ENCODE measurements at regions of chr5 and their contacts with region 1.

Region 1: GRCh38 chr5:55072666-55073065 is 29.8 kb upstream of the GZMA start:
- DNase-seq: peak in 4 of 5 donors; percentile 38 to 59 (median 44)
- H3K4me3 ChIP-seq: no peak overlapping the region
- H3K4me3 Mint-ChIP-seq: peak overlapping the region; percentile 8 to 84 (median 56)
- H3K27ac ChIP-seq: peak overlapping the region; percentile 17
- H3K27ac Mint-ChIP-seq: peak overlapping the region; percentile 20 to 88 (median 78)
- H3K4me1 ChIP-seq: peaks cover 39% of the 10 kb centered on the region
- H3K4me1 Mint-ChIP-seq: peaks cover 25 to 48% (median 30%) of the 10 kb centered on the region in 4 donors
- H3K27me3 ChIP-seq: no peaks in the 10 kb centered on the region
- H3K27me3 Mint-ChIP-seq: no peaks in the 10 kb centered on the region

Region 2: DNA sequence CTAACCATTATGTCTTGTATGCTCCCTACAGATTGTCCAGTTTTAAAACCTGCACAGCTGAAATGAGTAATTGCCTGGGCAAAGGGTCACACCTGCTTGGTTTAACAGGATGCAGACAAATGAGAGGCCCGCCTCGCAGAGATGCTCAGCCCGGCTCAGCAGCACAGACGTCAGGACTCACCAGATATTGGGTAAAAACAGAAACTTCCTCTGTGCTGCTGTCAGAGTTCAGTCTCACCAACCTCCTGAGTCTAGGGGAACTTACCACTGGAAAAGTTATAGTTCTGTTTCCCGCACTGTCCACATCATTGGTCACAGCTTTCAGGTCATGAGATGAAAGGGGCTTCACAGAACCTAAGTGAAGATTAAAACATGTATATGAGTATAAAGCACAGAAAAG is 239.8 kb before region 1 on chr5:
- CTCF ChIA-PET with region 1: no interaction called
- POLR2A ChIA-PET with region 1: no interaction called
- intact Hi-C with region 1: no loop called
- DNase-seq: no peak
- H3K4me3 ChIP-seq: no peak overlapping the region
- H3K4me3 Mint-ChIP-seq: no peak overlapping the region
- H3K27ac ChIP-seq: no peak overlapping the region
- H3K27ac Mint-ChIP-seq: peak overlapping the region in 3 of 7 donors; percentile 47 to 78 (median 54)
- H3K4me1 ChIP-seq: peaks cover 12% of the 10 kb centered on the region
- H3K4me1 Mint-ChIP-seq: peaks cover 10 to 18% (median 11%) of the 10 kb centered on the region in 4 donors
- H3K27me3 ChIP-seq: no peaks in the 10 kb centered on the region
- H3K27me3 Mint-ChIP-seq: peaks cover 1 to 2% of the 10 kb centered on the region in 2 donors

Region 3: DNA sequence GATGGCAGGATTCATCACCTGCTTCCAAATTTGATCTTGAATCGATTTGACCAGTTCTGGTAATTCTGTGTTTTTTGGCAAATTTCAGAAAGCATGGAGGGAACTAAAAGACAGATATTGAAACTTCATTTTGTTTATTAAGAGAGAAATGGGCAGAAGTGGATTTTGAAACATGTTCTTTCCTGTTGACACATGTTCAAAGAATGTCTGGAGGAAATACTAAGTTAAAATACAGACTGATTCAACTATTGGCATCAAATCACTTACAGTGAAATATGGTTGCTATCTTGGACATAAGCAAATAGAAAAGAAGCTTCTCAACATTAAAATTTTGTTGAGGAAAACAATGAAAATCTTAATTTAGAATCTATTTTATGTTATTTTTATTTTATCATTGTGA is 67.9 kb before region 1 on chr5:
- CTCF ChIA-PET with region 1: no interaction called
- POLR2A ChIA-PET with region 1: no interaction called
- intact Hi-C with region 1: loop called (anchors 5 kb)
- DNase-seq: no peak
- H3K4me3 ChIP-seq: no peak overlapping the region
- H3K4me3 Mint-ChIP-seq: peak overlapping the region in 2 of 8 donors; percentile 26 to 40
- H3K27ac ChIP-seq: no peak overlapping the region
- H3K27ac Mint-ChIP-seq: peak overlapping the region in 1 of 7 donors; percentile 11
- H3K4me1 ChIP-seq: peaks cover 51% of the 10 kb centered on the region
- H3K4me1 Mint-ChIP-seq: peaks cover 43 to 81% (median 57%) of the 10 kb centered on the region in 4 donors
- H3K27me3 ChIP-seq: no peaks in the 10 kb centered on the region
- H3K27me3 Mint-ChIP-seq: no peaks in the 10 kb centered on the region

Measured in CD4-positive, alpha-beta memory T cell (primary cell).